Naive thymus-derived CD4-positive, alpha-beta T cell (primary cell): ENCODE measurements at regions of chr10 and their contacts with region 1.

Region 1: DNA sequence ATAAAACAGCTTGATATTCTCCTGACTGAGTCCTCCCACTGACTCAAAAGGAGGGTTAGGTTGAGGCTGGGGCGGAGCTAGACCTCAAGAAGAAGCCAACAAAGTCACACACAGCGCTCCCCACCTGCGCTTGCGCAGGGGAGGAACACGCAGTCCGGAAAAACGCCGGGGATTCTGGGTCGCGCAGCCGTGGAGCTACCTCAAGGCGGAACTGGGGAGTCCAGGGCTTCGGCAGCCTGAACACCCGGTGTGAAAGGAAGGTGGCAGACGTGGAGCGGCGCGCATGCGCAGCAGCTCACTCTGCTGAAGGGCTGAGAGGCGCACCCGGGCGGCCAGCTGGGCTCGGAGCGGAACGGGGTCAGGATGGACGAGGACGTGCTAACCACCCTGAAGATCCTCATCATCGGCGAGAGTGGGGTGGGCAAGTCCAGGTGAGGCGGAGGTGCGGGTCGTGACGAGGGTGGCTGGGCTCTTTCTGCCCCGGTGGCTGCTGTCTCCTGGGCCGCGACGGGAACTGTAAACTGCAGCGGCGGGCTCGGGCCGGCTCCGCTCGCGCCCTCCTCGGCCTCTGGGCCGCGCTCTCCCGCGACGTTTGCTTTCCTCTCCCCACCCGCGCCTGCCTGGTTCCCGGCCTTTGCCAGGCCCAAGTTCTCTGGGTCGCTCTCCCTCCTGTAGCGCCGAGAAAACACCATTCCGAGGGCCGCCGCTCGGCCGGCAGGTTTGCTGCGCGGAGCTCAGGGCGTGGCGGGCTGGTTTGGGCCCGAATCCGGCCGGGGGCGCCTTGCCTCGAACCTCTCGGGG is at the start of gene RAB18:
- DNase-seq: peak; percentile 93 to 99 (median 98)
- ATAC-seq: peak; percentile 97
- H3K4me3 ChIP-seq: peak within 1 kb of the TSS; percentile 82
- H3K4me3 Mint-ChIP-seq: peak within 1 kb of the TSS; percentile 95 to 100 (median 99)
- H3K27ac ChIP-seq: peak within 1 kb of the TSS; percentile 87
- H3K27ac Mint-ChIP-seq: peak within 1 kb of the TSS; percentile 96 to 99 (median 98)
- H3K4me1 ChIP-seq: peaks cover 13 to 18% of the 10 kb centered on the region in 2 donors
- H3K4me1 Mint-ChIP-seq: peaks cover 39 to 59% (median 55%) of the 10 kb centered on the region in 7 donors
- H3K27me3 ChIP-seq: no peaks in the 10 kb centered on the region
- H3K27me3 Mint-ChIP-seq: peaks cover 0 to 7% (median 0%) of the 10 kb centered on the region in 5 donors
- total RNA-seq, gene RAB18: 69.1 to 96.1 (median 73.6) TPM

Region 2: GRCh38 chr10:27155066-27155754 is 349.0 kb before region 1 on chr10 and contains the start of gene MASTL:
- CTCF ChIA-PET with region 1: no interaction called
- POLR2A ChIA-PET with region 1: interaction called, 12 read pairs
- intact Hi-C with region 1: loop called (anchors 1 kb)
- DNase-seq: peak; percentile 93 to 97 (median 96)
- ATAC-seq: peak; percentile 89
- H3K4me3 ChIP-seq: peak within 1 kb of the TSS; percentile 90
- H3K4me3 Mint-ChIP-seq: peak within 1 kb of the TSS; percentile 91 to 100 (median 99)
- H3K27ac ChIP-seq: peak within 1 kb of the TSS; percentile 99
- H3K27ac Mint-ChIP-seq: peak within 1 kb of the TSS; percentile 100
- H3K4me1 ChIP-seq: peaks cover 13 to 17% of the 10 kb centered on the region in 2 donors
- H3K4me1 Mint-ChIP-seq: peaks cover 34 to 60% (median 50%) of the 10 kb centered on the region in 7 donors
- H3K27me3 ChIP-seq: no peaks in the 10 kb centered on the region
- H3K27me3 Mint-ChIP-seq: peaks cover 0 to 2% (median 0%) of the 10 kb centered on the region in 5 donors
- total RNA-seq, gene MASTL: 8.4 to 29.0 (median 20.2) TPM

Region 3: DNA sequence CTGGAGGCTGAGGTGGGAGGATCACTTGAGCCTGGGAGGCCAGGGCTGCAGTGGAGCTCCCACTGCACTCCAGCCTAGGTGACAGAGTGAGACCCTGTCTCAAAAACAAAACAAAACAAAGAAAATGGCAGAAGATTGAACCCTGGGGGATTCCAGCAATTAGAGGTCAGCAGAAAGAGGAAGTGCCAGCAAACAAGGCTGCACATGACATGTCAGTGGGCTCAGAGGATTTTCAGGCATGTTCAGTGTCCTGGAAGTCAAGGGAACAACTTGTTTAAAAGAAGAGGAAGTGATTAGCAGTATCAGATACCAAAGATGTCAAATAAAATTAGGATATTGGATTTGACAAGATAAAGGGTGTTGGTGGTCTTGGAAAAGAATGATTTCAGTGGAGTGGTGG is 32.2 kb after region 1 on chr10:
- CTCF ChIA-PET with region 1: interaction called, 3 read pairs
- POLR2A ChIA-PET with region 1: no interaction called
- intact Hi-C with region 1: loop called in 1 of 2 experiments (anchors 1 kb)
- DNase-seq: no peak
- ATAC-seq: no peak
- H3K4me3 ChIP-seq: no peak overlapping the region
- H3K4me3 Mint-ChIP-seq: no peak overlapping the region
- H3K27ac ChIP-seq: no peak overlapping the region
- H3K27ac Mint-ChIP-seq: no peak overlapping the region
- H3K4me1 ChIP-seq: peaks cover 0 to 7% of the 10 kb centered on the region in 2 donors
- H3K4me1 Mint-ChIP-seq: peaks cover 4 to 26% (median 15%) of the 10 kb centered on the region in 7 donors
- H3K27me3 ChIP-seq: no peaks in the 10 kb centered on the region
- H3K27me3 Mint-ChIP-seq: no peaks in the 10 kb centered on the region

Region 4: GRCh38 chr10:27742195-27743011 is 238.2 kb after region 1 on chr10:
- CTCF ChIA-PET with region 1: interaction called, 3 read pairs
- POLR2A ChIA-PET with region 1: no interaction called
- intact Hi-C with region 1: loop called in 1 of 2 experiments (anchors 2 kb)
- DNase-seq: peak; percentile 58 to 82 (median 77)
- ATAC-seq: peak; percentile 87
- H3K4me3 ChIP-seq: peak overlapping the region; percentile 73
- H3K4me3 Mint-ChIP-seq: peak overlapping the region; percentile 70 to 96 (median 86)
- H3K27ac ChIP-seq: no peak overlapping the region
- H3K27ac Mint-ChIP-seq: peak overlapping the region in 1 of 9 donors; percentile 20
- H3K4me1 ChIP-seq: peaks cover 27 to 42% of the 10 kb centered on the region in 2 donors
- H3K4me1 Mint-ChIP-seq: peaks cover 23 to 44% (median 29%) of the 10 kb centered on the region in 7 donors
- H3K27me3 ChIP-seq: peaks cover 16 to 55% of the 10 kb centered on the region in 2 donors
- H3K27me3 Mint-ChIP-seq: peaks cover 51 to 82% (median 65%) of the 10 kb centered on the region in 5 donors

Region 5: DNA sequence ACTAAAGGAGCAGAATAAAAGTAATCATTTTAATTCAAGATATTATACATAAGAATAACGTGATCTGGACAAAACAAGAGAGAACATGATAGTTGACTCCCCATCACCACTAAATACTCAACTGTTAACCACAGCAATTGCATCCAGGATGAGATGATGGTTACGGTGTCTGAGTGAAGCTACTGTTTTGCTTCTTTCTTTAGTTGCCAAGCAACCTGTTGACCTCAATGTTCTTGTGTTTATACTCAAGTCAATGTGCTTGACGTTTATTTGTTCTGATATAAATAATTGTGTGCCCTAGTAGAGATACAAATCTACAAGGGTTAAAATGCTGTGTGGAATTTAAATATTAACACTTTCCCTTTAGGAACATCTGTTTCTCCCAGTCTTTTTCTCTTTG is 830.1 kb after region 1 on chr10:
- CTCF ChIA-PET with region 1: no interaction called
- POLR2A ChIA-PET with region 1: no interaction called
- intact Hi-C with region 1: loop called in 1 of 2 experiments (anchors 1 kb)
- DNase-seq: peak in 8 of 9 donors; percentile 32 to 95 (median 91)
- ATAC-seq: peak; percentile 83
- H3K4me3 ChIP-seq: peak overlapping the region; percentile 62
- H3K4me3 Mint-ChIP-seq: peak overlapping the region; percentile 72 to 97 (median 91)
- H3K27ac ChIP-seq: peak overlapping the region; percentile 98
- H3K27ac Mint-ChIP-seq: peak overlapping the region; percentile 96 to 100 (median 99)
- H3K4me1 ChIP-seq: peaks cover 33 to 56% of the 10 kb centered on the region in 2 donors
- H3K4me1 Mint-ChIP-seq: peaks cover 44 to 88% (median 71%) of the 10 kb centered on the region in 7 donors
- H3K27me3 ChIP-seq: no peaks in the 10 kb centered on the region
- H3K27me3 Mint-ChIP-seq: peaks cover 0 to 9% (median 0%) of the 10 kb centered on the region in 5 donors